BJ (cell line): ENCODE measurements at regions of chr22 and their contacts with region 1.

Region 1: DNA sequence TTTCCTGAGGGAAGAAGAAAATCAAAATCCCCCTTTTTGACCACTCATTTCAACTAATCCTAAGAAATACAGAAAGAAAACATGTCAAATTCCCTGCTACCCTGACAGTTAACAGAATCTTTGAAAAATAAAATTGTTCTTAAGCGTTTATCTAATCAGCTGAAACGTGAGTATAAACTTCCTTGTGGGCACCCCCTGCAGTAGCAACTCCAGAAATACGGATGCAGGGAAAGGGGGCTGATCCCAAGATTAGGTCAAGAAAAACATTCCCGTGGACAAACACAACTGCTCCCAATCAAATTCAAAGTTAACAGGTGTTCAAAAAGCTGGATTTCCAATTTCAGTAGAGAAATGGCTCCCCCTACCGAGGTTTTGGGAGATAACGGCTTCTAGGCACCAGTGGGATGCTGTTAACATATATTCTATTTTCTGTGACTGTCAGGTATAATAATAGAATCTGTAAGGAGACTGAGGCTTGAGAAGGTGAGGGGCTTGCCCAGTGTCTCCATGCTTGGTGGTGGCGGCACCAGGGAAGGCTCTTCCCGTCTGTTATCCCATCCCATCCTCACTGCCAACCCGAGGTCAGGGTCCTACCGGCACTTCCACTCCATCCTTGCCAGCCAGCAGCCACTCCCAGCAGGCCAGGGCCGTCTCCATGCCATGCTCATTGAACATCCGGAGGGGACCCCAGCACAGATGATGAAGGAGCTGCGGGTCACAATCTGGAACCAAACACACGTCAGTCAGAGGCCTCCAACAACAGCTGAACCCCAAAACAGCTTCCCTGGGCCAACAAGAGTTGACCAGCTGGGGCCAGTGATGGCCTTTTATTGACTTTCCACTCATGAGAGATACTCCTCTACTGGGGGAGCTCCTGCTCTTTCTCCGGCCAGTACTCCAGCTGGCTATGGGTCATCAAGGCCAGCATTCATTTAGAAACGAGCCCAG is 32.0 kb upstream of the SERPIND1 start:
- DNase-seq: no peak
- H3K4me3 ChIP-seq: no peak overlapping the region
- H3K27me3 ChIP-seq: no peaks in the 10 kb centered on the region
- CTCF ChIP-seq: peak; percentile 72

Region 2: GRCh38 chr22:20640999-20641892 is 100.7 kb before region 1 on chr22:
- CTCF ChIA-PET with region 1: no interaction called
- POLR2A ChIA-PET with region 1: no interaction called
- DNase-seq: no peak
- H3K4me3 ChIP-seq: no peak overlapping the region
- H3K27me3 ChIP-seq: peaks cover 3% of the 10 kb centered on the region; the same call in 1 of the 2 replicates
- CTCF ChIP-seq: no peak

Region 3: DNA sequence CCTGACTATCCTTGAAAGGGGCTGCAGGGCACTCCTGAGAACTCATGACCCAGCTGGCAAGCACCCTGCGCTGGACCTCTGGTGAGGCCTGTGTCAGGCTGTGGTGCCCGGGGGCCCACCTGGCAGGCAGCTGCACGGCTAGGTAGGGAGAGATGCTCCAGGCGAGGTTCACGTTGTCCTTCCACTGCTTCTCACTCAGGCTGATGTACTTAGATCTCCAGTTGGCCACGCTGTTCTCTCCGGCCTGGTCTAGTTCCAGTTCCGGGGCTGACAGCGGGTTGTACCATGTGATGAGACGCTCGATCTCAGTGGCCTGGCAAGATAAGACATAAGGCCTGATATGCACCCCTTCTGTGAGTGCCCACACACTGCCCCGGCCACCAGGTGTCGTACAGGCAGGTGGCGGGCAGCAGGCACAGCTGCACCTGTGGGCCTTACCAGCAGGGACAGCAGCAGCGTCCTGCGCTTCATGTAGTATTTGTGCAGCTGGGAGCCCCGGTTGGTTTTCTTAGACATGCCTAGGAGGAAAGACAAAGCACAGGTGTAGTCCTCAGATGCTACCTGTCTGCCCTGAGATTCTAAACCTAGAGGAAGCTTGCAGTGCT is 12.6 kb before region 1 on chr22:
- CTCF ChIA-PET with region 1: interaction called, 14 read pairs
- POLR2A ChIA-PET with region 1: no interaction called
- DNase-seq: no peak
- H3K4me3 ChIP-seq: no peak overlapping the region
- H3K27me3 ChIP-seq: no peaks in the 10 kb centered on the region
- CTCF ChIP-seq: no peak

Region 4: DNA sequence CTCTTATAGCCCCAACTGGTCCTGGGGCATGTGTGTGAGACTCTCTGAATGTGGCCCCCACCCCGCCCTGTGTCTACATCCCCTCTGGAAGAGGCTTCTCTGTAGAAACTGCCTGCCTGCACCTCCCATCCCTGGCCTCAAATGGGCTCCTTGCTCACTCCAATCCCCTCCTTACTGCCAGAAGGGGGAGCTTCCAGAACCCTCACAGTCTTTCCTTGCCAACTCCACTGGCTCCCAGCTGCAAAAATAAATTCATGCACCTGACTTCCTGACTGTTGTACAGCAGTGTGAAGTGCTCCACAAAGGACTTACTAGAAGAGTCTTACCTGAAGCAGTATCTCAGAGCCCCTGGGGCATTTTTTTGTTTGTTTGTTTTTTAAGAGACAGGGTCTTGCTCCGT is 16.8 kb after region 1 on chr22:
- CTCF ChIA-PET with region 1: interaction called, 22 read pairs
- POLR2A ChIA-PET with region 1: no interaction called
- DNase-seq: no peak
- H3K4me3 ChIP-seq: no peak overlapping the region
- H3K27me3 ChIP-seq: no peaks in the 10 kb centered on the region
- CTCF ChIP-seq: no peak